Breast epithelium (tissue), 4 donors: ENCODE measurements at regions of chr17 and their contacts with region 1.

Region 1: DNA sequence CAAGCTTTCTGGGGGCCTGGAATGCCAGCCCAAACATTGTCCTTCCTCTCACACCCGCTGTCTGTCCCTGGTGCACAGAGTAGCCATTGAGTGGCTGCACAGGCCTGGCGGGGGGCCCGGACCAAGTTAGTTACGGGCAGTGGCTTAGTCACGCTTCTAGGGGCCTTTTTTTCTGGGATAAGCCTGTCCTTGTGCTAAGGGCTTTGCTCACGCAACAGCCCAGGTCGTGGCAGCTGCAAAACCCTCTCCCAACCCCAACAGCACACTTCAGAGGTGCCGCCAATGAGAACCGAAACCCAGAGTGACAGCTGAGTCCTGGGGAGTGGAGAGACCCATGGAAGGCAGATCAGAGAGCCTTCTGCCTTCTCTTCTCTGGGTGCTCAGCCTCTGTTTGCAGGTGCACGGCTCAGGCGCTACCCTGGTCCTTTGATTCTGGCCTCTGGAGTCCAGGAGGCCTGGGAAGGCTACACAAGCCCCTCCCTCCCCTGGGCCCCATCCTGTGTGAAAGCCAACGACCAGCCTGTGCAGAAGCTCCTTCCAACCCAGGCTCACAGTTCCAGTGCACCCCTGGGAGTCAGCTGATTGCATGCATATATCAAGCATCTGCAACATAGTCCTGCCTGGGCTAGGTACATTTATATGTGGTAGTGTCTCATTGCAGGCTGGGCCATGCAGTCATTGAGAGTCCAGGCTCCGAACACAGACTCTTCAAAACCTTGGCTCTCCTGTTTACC is 9.1 kb downstream of the WSCD1 start:
- DNase-seq: no peak
- H3K4me3 ChIP-seq: no peak overlapping the region
- H3K27ac ChIP-seq: no peak overlapping the region
- H3K4me1 ChIP-seq: no peaks in the 10 kb centered on the region
- H3K27me3 ChIP-seq: peaks cover 0 to 37% of the 10 kb centered on the region in 2 donors
- CTCF ChIP-seq: no peak
- POLR2A ChIP-seq: no peak

Region 2: GRCh38 chr17:6706492-6706891 is 627.2 kb after region 1 on chr17:
- intact Hi-C with region 1: loop called (anchors 5 kb)
- DNase-seq: no peak
- H3K4me3 ChIP-seq: no peak overlapping the region
- H3K27ac ChIP-seq: no peak overlapping the region
- H3K4me1 ChIP-seq: no peaks in the 10 kb centered on the region
- H3K27me3 ChIP-seq: no peaks in the 10 kb centered on the region
- CTCF ChIP-seq: no peak
- POLR2A ChIP-seq: no peak